Activated naive CD4-positive, alpha-beta T cell treated with anti-CD3 and anti-CD28 coated beads for 36 hours (primary cell): ENCODE measurements at regions of chr12 and their contacts with region 1.

Region 1: GRCh38 chr12:21501379-21501956 is at the starts of genes GOLT1B and RECQL:
- DNase-seq: peak; percentile 95
- H3K4me3 Mint-ChIP-seq: no peak within 1 kb of the TSS
- H3K27ac Mint-ChIP-seq: no peak within 1 kb of the TSS
- H3K4me1 Mint-ChIP-seq: peaks cover 44% of the 10 kb centered on the region
- H3K27me3 Mint-ChIP-seq: no peaks in the 10 kb centered on the region
- total RNA-seq, gene GOLT1B: 36.2 to 36.8 TPM
- total RNA-seq, gene RECQL: 89.8 to 93.7 TPM

Region 2: DNA sequence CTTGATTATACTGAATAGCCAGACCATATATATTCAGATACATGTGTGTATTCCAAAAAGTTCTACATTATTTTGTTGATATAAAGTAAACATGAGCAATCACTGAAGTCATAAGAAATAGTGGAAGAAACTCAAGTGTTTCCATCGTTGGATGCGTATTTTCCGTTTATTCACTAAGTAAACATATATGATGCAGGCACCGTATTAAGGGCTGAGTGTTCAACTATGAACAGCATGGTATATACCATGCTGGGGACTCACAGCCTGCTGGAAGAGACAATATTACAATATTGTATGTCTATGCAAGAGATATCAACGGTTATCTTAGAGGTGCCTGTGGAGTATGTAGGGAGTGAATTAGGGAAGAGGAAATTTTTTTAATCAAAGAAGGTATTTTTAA is 62.8 kb before region 1 on chr12:
- CTCF ChIA-PET with region 1: no interaction called
- intact Hi-C with region 1: loop called (anchors 1 kb)
- DNase-seq: no peak
- H3K4me3 Mint-ChIP-seq: peak overlapping the region; percentile 90
- H3K27ac Mint-ChIP-seq: peak overlapping the region; percentile 95
- H3K4me1 Mint-ChIP-seq: peaks cover 38% of the 10 kb centered on the region
- H3K27me3 Mint-ChIP-seq: no peaks in the 10 kb centered on the region

Region 3: DNA sequence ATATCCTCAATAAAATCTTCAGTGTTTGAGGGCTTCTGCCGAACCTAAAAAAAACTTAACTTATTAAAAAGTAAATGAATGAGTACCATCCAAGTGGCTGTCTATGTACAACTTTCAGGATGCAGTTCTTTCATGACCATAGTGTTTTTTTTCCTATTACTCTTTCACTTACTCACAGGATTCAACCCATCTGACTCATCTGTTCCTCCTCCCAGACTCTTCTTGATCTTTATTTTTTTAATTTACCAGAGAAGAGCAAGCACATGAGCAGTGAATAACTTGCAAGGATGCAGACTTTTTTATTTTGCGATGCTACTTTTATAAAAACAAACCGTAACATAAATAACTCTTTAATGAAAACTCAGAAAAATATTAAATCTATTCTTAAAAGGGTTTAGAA is 24.5 kb before region 1 on chr12:
- CTCF ChIA-PET with region 1: no interaction called
- intact Hi-C with region 1: loop called (anchors 1 kb)
- DNase-seq: no peak
- H3K4me3 Mint-ChIP-seq: no peak overlapping the region
- H3K27ac Mint-ChIP-seq: peak overlapping the region; percentile 50
- H3K4me1 Mint-ChIP-seq: peaks cover 16% of the 10 kb centered on the region
- H3K27me3 Mint-ChIP-seq: no peaks in the 10 kb centered on the region

Region 4: GRCh38 chr12:21539797-21540196 is 38.3 kb after region 1 on chr12:
- CTCF ChIA-PET with region 1: no interaction called
- intact Hi-C with region 1: loop called (anchors 1 kb)
- DNase-seq: no peak
- H3K4me3 Mint-ChIP-seq: no peak overlapping the region
- H3K27ac Mint-ChIP-seq: no peak overlapping the region
- H3K4me1 Mint-ChIP-seq: peaks cover 12% of the 10 kb centered on the region
- H3K27me3 Mint-ChIP-seq: no peaks in the 10 kb centered on the region

Region 5: GRCh38 chr12:21657326-21658077 is 156.0 kb after region 1 on chr12 and contains the start of gene LDHB:
- CTCF ChIA-PET with region 1: no interaction called
- intact Hi-C with region 1: loop called (anchors 1 kb)
- DNase-seq: peak; percentile 98
- H3K4me3 Mint-ChIP-seq: peak within 1 kb of the TSS; percentile 98
- H3K27ac Mint-ChIP-seq: peak within 1 kb of the TSS; percentile 98
- H3K4me1 Mint-ChIP-seq: peaks cover 59% of the 10 kb centered on the region
- H3K27me3 Mint-ChIP-seq: no peaks in the 10 kb centered on the region
- total RNA-seq, gene LDHB: 2,296 to 2,461 TPM

Region 6: DNA sequence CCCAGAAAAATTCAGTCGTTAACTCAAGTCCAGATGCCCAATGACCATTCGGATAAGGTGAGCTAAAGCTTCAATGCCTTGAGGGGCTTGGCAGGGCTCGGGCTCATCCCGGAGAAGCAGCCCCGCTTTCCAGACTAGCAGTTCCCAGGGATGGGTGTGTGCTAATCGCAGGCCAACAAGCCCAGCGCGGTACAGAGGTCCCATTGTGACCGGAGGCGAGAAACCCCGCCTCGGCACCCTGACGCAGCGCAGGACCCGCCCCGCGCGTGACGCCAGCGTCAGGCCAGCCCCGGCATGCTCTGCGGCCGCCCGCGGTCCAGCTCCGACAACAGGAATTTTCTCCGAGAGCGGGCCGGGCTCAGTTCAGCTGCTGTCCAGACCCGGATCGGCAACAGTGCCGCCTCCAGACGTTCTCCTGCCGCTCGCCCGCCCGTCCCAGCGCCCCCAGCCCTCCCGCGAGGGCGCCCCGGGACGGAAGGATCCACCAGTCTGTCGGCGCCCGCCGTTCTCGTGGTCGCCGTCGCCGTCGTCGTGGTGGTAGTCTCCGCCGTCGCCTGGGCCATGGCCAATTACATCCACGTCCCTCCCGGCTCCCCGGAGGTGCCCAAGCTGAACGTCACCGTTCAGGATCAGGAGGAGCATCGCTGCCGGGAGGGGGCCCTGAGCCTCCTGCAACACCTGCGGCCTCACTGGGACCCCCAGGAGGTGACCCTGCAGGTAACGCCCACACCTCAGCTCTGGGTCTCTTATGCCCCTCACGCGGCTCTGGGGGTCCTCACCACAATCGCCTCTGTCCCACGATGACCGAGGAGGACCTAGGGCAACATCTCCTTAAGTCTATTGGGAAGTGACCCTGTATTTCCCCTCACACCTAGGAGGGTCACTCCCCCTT is 1123.6 kb after region 1 on chr12 and contains the start of gene ETNK1:
- CTCF ChIA-PET with region 1: no interaction called
- intact Hi-C with region 1: loop called (anchors 10 kb)
- DNase-seq: peak; percentile 87
- H3K4me3 Mint-ChIP-seq: peak within 1 kb of the TSS; percentile 93
- H3K27ac Mint-ChIP-seq: peak within 1 kb of the TSS; percentile 90
- H3K4me1 Mint-ChIP-seq: peaks cover 28% of the 10 kb centered on the region
- H3K27me3 Mint-ChIP-seq: no peaks in the 10 kb centered on the region
- total RNA-seq, gene ETNK1: 35.9 to 39.4 TPM